ENCODE measurements at regions of chr1 and their contacts with region 1.

Region 1: DNA sequence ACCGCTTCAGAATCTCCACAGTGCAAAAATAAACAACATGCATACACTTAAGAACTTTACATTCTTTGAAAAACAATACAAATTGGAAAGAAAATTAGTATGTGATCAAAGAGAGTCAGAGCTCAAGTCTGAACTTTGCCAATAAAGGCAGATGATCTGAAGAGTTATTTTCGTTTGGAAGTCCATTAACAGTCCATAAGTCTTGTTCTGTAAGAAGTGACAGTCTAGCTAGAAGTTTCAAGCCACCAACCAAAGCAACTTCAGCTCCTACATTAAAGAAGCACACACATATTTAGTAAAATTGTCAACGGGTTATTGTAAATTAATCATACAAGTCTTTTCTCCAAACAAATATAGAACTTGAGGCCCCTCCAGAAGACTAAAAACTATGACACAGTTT is 20.7 kb downstream of the ANGEL2 start:
- DNase-seq: no peak
- ATAC-seq: no peak

Region 2: GRCh38 chr1:212814537-212815334 is 180.2 kb before region 1 on chr1:
- intact Hi-C with region 1: loop called (anchors 1 to 5 kb)
- DNase-seq: no peak
- ATAC-seq: no peak

Region 3: DNA sequence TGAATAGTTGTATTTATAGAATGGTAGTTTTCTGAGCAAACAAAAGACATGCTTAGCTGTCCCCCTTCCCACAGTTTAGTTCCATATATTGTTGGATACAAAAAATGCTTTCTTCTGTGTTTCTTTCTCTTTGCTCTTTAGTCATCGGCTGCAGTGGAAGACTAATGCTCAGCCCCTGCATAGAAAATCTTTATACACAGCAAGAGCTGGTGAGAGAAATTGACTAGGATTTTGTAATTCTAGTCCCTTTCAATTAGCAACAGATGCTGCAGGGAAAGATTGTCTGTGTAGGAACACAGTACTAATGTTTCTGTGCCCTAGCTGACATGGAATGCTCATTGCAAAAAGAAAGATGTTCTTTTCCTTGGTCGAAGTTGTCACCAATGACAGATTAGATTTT is 257.0 kb after region 1 on chr1:
- intact Hi-C with region 1: no loop called
- DNase-seq: no peak
- ATAC-seq: no peak

Measured in left cardiac atrium (tissue), 4 donors.